Heart left ventricle (tissue), 16 donors: ENCODE measurements at regions of chr13 and their contacts with region 1.

Region 1: GRCh38 chr13:86870444-86870843 is 800.7 kb upstream of the SLITRK5 start:
- DNase-seq: no peak
- ATAC-seq: no peak
- H3K4me3 ChIP-seq: no peak overlapping the region
- H3K27ac ChIP-seq: no peak overlapping the region
- H3K4me1 ChIP-seq: no peaks in the 10 kb centered on the region
- H3K27me3 ChIP-seq: no peaks in the 10 kb centered on the region
- CTCF ChIP-seq: peak; percentile 23 to 72 (median 51)
- POLR2A ChIP-seq: no peak

Region 2: DNA sequence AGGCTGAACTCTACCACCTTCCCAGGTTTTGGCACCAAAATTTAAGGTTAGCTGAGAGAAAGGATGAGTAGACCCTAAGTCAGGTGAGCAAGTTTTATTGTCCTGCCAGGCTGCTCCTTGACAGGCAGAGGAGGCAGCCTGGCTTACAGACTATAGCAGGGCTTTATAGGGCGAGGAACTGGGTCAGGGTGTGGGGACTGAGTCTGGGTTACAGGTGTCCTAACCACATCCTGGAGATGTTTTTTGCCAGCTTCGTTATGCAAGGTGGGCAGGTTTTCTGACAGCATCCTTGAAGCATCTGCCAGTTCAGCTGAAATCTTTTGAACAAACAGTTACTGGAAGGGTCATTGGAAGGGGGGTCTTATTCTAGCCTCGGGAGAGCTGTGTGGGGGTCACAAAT is 105.0 kb before region 1 on chr13:
- intact Hi-C with region 1: no loop called
- DNase-seq: no peak
- ATAC-seq: no peak
- H3K4me3 ChIP-seq: no peak overlapping the region
- H3K27ac ChIP-seq: no peak overlapping the region
- H3K4me1 ChIP-seq: no peaks in the 10 kb centered on the region
- H3K27me3 ChIP-seq: no peaks in the 10 kb centered on the region
- CTCF ChIP-seq: no peak
- POLR2A ChIP-seq: no peak

Region 3: GRCh38 chr13:86825410-86825809 is 45.0 kb before region 1 on chr13:
- intact Hi-C with region 1: no loop called
- DNase-seq: no peak
- ATAC-seq: no peak
- H3K4me3 ChIP-seq: no peak overlapping the region
- H3K27ac ChIP-seq: no peak overlapping the region
- H3K4me1 ChIP-seq: no peaks in the 10 kb centered on the region
- H3K27me3 ChIP-seq: no peaks in the 10 kb centered on the region
- CTCF ChIP-seq: no peak
- POLR2A ChIP-seq: no peak

Region 4: DNA sequence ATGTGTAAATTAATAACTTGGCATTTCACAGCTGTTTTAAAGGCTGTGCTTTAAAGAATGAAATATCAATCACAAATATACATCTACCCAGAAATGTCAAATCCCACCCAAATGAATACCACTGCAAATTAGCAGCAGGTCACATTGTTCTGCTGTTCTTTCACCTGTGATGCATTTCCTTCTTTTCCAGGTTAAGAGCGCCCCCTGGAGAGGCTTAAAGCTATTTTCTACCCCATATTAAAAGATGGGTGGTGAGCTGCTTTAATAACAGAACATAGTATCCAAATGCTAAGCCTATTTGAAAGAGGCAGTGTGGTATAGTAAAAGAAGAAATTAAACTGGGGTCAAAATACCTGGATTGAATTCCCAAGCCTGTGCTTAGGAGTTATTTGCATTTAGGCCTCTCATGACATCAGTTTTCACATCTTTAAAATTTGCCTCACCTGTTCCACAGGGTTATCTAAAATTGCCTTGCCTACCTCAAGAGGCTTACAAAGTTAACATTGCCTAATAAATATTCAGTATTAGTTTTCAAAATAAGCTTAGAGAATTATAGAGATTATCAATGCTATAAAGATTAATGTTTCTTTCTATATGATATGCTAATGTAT is 403.9 kb after region 1 on chr13:
- intact Hi-C with region 1: loop called in 8 of 10 experiments (anchors 2 to 10 kb)
- DNase-seq: no peak
- ATAC-seq: no peak
- H3K4me3 ChIP-seq: no peak overlapping the region
- H3K27ac ChIP-seq: no peak overlapping the region
- H3K4me1 ChIP-seq: no peaks in the 10 kb centered on the region
- H3K27me3 ChIP-seq: no peaks in the 10 kb centered on the region
- CTCF ChIP-seq: peak in 11 of 12 donors; percentile 26 to 59 (median 40)
- POLR2A ChIP-seq: no peak